T-cell (primary cell): ENCODE measurements at regions of chr6 and their contacts with region 1.

Region 1: GRCh38 chr6:52284460-52285176 is at the start of gene MCM3:
- DNase-seq: peak; percentile 85 to 98 (median 94)
- ATAC-seq: peak; percentile 95 to 98 (median 98)
- H3K4me3 ChIP-seq: peak within 1 kb of the TSS; percentile 69 to 90
- H3K4me3 Mint-ChIP-seq: peak within 1 kb of the TSS in 1 of 3 donors; percentile 70
- H3K27ac ChIP-seq: peak within 1 kb of the TSS; percentile 72
- H3K27ac Mint-ChIP-seq: peak within 1 kb of the TSS in 1 of 2 donors; percentile 28
- H3K4me1 ChIP-seq: peaks cover 27 to 34% of the 10 kb centered on the region in 2 experiments
- H3K4me1 Mint-ChIP-seq: peaks cover 37 to 54% (median 38%) of the 10 kb centered on the region in 3 donors
- H3K27me3 ChIP-seq: no peaks in the 10 kb centered on the region
- H3K27me3 Mint-ChIP-seq: no peaks in the 10 kb centered on the region
- total RNA-seq, gene MCM3: 22.9 to 52.1 (median 47.5) TPM

Region 2: GRCh38 chr6:51711876-51712275 is 572.7 kb before region 1 on chr6:
- CTCF ChIA-PET with region 1: no interaction called
- POLR2A ChIA-PET with region 1: no interaction called
- DNase-seq: no peak
- ATAC-seq: no peak
- H3K4me3 ChIP-seq: no peak overlapping the region
- H3K4me3 Mint-ChIP-seq: no peak overlapping the region
- H3K27ac ChIP-seq: no peak overlapping the region
- H3K27ac Mint-ChIP-seq: no peak overlapping the region
- H3K4me1 ChIP-seq: no peaks in the 10 kb centered on the region
- H3K4me1 Mint-ChIP-seq: no peaks in the 10 kb centered on the region
- H3K27me3 ChIP-seq: no peaks in the 10 kb centered on the region
- H3K27me3 Mint-ChIP-seq: no peaks in the 10 kb centered on the region

Region 3: GRCh38 chr6:52087498-52087999 is 197.1 kb before region 1 on chr6 and contains the start of gene PKHD1:
- CTCF ChIA-PET with region 1: no interaction called
- POLR2A ChIA-PET with region 1: no interaction called
- DNase-seq: peak in 1 of 35 experiments; percentile 12
- ATAC-seq: no peak
- H3K4me3 ChIP-seq: no peak within 1 kb of the TSS
- H3K4me3 Mint-ChIP-seq: no peak within 1 kb of the TSS
- H3K27ac ChIP-seq: no peak within 1 kb of the TSS
- H3K27ac Mint-ChIP-seq: no peak within 1 kb of the TSS
- H3K4me1 ChIP-seq: no peaks in the 10 kb centered on the region
- H3K4me1 Mint-ChIP-seq: no peaks in the 10 kb centered on the region
- H3K27me3 ChIP-seq: peaks cover 0 to 3% of the 10 kb centered on the region in 2 experiments
- H3K27me3 Mint-ChIP-seq: peaks cover 5 to 9% of the 10 kb centered on the region in 2 donors
- total RNA-seq, gene PKHD1: 0.03 TPM in 2 of 5 donors, not detected in the others

Region 4: DNA sequence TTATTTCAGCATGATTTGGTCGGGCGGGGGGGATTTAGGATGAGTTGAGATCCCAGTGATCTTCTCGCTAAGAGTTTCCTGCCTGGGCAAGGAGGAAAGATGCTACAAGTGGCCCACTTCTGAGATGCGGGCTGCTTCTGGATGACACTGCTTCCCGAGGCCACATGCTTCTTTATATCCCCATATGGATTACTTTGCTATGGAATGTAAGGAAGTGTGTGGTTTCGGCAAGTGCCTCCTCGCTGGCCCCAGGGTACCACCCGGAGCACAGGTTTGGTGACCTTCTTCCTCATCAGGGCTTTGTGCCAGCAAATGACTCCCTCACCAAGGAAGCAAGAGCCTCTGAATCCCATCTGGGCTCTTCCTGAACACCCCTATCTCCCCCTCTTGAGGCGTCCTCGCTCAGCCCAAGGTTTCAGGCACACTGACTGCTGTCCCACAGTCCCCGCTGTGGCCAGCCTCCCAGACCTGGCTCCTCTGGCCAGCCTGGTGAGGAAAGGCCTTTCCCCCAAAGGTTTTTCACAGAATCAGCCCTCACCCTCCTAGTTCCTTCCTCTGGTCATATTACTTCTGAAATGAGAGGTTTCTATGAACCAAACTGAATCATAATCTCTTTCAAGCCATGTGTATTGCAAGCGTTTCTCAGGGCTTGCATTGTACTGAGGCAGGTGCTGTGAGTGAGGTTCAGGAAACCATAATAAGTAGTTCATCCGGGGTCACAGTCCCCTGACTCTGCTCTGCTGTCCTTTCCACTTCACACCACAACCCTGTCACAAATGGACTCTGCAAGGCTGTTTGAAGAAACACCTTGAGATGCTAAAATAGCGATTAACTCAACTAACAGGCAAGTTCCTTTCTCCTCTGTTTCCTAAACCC is 140.2 kb before region 1 on chr6:
- CTCF ChIA-PET with region 1: no interaction called
- POLR2A ChIA-PET with region 1: no interaction called
- DNase-seq: no peak
- ATAC-seq: no peak
- H3K4me3 ChIP-seq: no peak overlapping the region
- H3K4me3 Mint-ChIP-seq: no peak overlapping the region
- H3K27ac ChIP-seq: no peak overlapping the region
- H3K27ac Mint-ChIP-seq: no peak overlapping the region
- H3K4me1 ChIP-seq: no peaks in the 10 kb centered on the region
- H3K4me1 Mint-ChIP-seq: no peaks in the 10 kb centered on the region
- H3K27me3 ChIP-seq: peaks cover 0 to 18% of the 10 kb centered on the region in 2 experiments
- H3K27me3 Mint-ChIP-seq: peaks cover 26 to 33% of the 10 kb centered on the region in 2 donors

Region 5: DNA sequence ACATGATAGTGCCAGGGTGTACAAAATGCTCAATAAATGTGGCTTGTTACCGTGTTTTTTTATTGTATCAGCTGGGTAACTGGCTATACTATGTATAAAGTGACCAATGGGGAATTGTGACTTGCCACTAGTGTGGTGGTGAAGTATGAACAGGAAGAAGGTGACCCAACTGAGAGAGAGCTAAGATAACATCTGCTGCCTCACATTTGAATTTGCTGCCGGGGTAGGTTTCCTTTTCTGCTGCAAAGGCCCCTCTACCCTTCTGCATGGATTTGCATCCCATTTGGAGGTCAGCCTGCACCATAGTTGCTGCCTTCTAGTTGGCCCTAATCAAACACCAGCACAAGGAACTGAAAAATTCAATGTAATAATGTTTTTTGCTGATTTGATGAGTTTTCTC is 74.4 kb before region 1 on chr6:
- CTCF ChIA-PET with region 1: no interaction called
- POLR2A ChIA-PET with region 1: no interaction called
- DNase-seq: no peak
- ATAC-seq: no peak
- H3K4me3 ChIP-seq: no peak overlapping the region
- H3K4me3 Mint-ChIP-seq: no peak overlapping the region
- H3K27ac ChIP-seq: no peak overlapping the region
- H3K27ac Mint-ChIP-seq: no peak overlapping the region
- H3K4me1 ChIP-seq: no peaks in the 10 kb centered on the region
- H3K4me1 Mint-ChIP-seq: peaks cover 6 to 10% (median 8%) of the 10 kb centered on the region in 3 donors
- H3K27me3 ChIP-seq: peaks cover 0 to 7% of the 10 kb centered on the region in 2 experiments
- H3K27me3 Mint-ChIP-seq: peaks cover 18 to 20% of the 10 kb centered on the region in 2 donors

Region 6: GRCh38 chr6:52263709-52264540 is 20.7 kb before region 1 on chr6:
- CTCF ChIA-PET with region 1: interaction called, 8 to 13 read pairs
- POLR2A ChIA-PET with region 1: no interaction called
- DNase-seq: peak; percentile 32 to 81 (median 60)
- ATAC-seq: peak; percentile 74 to 82 (median 80)
- H3K4me3 ChIP-seq: no peak overlapping the region
- H3K4me3 Mint-ChIP-seq: no peak overlapping the region
- H3K27ac ChIP-seq: no peak overlapping the region
- H3K27ac Mint-ChIP-seq: peak overlapping the region in 1 of 2 donors; percentile 34
- H3K4me1 ChIP-seq: peaks cover 0 to 7% of the 10 kb centered on the region in 2 experiments
- H3K4me1 Mint-ChIP-seq: peaks cover 7 to 13% (median 12%) of the 10 kb centered on the region in 3 donors
- H3K27me3 ChIP-seq: no peaks in the 10 kb centered on the region
- H3K27me3 Mint-ChIP-seq: no peaks in the 10 kb centered on the region

Region 7: GRCh38 chr6:52304983-52305390 is 20.4 kb after region 1 on chr6:
- CTCF ChIA-PET with region 1: interaction called, 8 to 12 read pairs
- POLR2A ChIA-PET with region 1: interaction called, 3 to 6 read pairs
- DNase-seq: peak in 1 of 35 experiments; percentile 39
- ATAC-seq: peak in 2 of 4 experiments; percentile 32 to 34
- H3K4me3 ChIP-seq: no peak overlapping the region
- H3K4me3 Mint-ChIP-seq: peak overlapping the region; percentile 51 to 65 (median 54)
- H3K27ac ChIP-seq: peak overlapping the region; percentile 86
- H3K27ac Mint-ChIP-seq: peak overlapping the region; percentile 95
- H3K4me1 ChIP-seq: peaks cover 40 to 66% of the 10 kb centered on the region in 2 experiments
- H3K4me1 Mint-ChIP-seq: peaks cover 76 to 87% (median 80%) of the 10 kb centered on the region in 3 donors
- H3K27me3 ChIP-seq: no peaks in the 10 kb centered on the region
- H3K27me3 Mint-ChIP-seq: no peaks in the 10 kb centered on the region

Region 8: DNA sequence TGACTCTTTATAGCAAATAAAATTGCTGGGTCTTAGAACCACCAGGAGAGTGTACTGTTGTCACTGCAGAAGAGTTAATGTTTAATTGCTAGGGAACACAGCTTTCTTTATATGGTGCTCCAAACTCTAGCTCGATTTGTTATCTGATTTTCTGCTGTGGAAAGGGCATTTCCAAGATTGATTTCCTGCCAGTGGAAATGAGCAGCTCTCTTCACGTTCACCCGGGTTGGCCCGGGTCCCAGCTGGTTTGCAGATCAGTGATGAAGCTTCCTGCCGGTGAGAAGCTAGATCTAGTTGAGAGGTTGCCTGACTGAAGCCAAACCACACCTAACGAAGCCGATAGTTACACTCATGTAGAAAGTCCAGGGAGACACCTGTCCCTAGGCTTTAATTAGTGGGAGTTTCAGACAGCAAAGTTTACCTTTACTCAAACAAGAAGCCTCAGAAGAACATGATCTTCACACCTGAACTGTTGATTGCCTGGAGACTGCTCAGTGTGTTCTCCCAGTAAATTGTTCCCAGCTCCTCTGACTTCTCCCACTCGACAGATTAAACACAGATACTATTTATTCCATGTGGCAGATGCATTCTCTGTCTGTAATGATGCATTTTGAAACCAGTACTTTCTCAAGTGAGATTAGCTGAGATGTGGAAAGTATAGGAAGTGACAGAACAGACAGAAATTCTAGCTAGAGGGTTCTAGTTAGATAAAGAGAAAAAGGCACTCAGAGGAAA is 105.2 kb after region 1 on chr6:
- CTCF ChIA-PET with region 1: interaction called, 8 to 52 read pairs
- POLR2A ChIA-PET with region 1: interaction called, 5 to 9 read pairs
- DNase-seq: peak; percentile 22 to 77 (median 57)
- ATAC-seq: peak; percentile 48 to 69 (median 64)
- H3K4me3 ChIP-seq: peak overlapping the region; percentile 25 to 29
- H3K4me3 Mint-ChIP-seq: peak overlapping the region; percentile 68 to 81 (median 81)
- H3K27ac ChIP-seq: peak overlapping the region; percentile 89
- H3K27ac Mint-ChIP-seq: peak overlapping the region; percentile 96 to 98
- H3K4me1 ChIP-seq: peaks cover 50 to 65% of the 10 kb centered on the region in 2 experiments
- H3K4me1 Mint-ChIP-seq: peaks cover 85 to 96% (median 92%) of the 10 kb centered on the region in 3 donors
- H3K27me3 ChIP-seq: no peaks in the 10 kb centered on the region
- H3K27me3 Mint-ChIP-seq: no peaks in the 10 kb centered on the region

Region 9: GRCh38 chr6:52407467-52407866 is 122.8 kb after region 1 on chr6:
- CTCF ChIA-PET with region 1: interaction called, 16 to 91 read pairs
- POLR2A ChIA-PET with region 1: no interaction called
- DNase-seq: peak in 3 of 35 experiments; percentile 22 to 63 (median 23)
- ATAC-seq: peak; percentile 61 to 86 (median 73)
- H3K4me3 ChIP-seq: no peak overlapping the region
- H3K4me3 Mint-ChIP-seq: no peak overlapping the region
- H3K27ac ChIP-seq: no peak overlapping the region
- H3K27ac Mint-ChIP-seq: peak overlapping the region; percentile 46 to 66
- H3K4me1 ChIP-seq: peaks cover 0 to 11% of the 10 kb centered on the region in 2 experiments
- H3K4me1 Mint-ChIP-seq: peaks cover 29 to 36% (median 36%) of the 10 kb centered on the region in 3 donors
- H3K27me3 ChIP-seq: no peaks in the 10 kb centered on the region
- H3K27me3 Mint-ChIP-seq: no peaks in the 10 kb centered on the region

Region 10: DNA sequence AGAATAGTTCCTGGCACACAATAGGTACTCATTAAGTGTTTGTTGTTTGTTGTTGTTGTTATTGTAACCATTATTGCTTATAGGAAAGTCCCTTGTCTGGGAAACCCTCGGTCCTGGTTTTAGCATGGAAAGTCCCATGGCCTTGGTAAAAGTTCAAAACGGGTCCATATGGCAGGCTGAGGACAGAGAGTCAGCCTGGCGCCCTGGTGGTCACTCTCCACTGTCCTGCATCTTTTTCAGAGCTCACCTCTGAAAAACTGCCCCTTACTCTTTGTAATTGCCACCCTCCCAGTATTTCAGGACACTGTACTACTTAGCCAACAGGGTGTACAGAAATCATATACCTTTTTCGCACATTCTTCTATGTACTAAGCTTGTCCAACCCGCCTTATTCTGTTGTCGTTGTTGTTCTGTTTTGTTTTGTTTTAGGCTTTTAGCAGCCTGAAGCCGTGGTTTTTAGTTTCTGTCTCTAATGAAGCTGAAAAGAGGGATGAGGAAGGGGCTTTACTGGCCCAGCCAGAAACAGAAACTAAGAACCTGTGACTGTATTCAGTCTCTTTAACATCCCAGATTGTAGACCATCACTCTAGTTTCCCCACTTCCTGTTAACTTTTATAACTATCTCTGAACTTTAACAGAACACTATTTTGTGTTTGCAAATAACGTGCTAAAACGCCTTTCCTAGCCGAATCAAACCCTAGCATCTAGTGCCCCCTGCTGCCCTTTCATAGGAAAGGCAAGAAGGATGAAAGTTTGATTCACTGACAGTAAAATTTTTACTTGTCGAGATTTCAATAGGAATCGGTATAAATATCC is 378.7 kb after region 1 on chr6:
- CTCF ChIA-PET with region 1: interaction called, 6 to 11 read pairs
- POLR2A ChIA-PET with region 1: no interaction called
- DNase-seq: peak in 34 of 35 experiments; percentile 25 to 89 (median 50)
- ATAC-seq: peak; percentile 61 to 78 (median 74)
- H3K4me3 ChIP-seq: peak overlapping the region; percentile 54 to 70
- H3K4me3 Mint-ChIP-seq: no peak overlapping the region
- H3K27ac ChIP-seq: no peak overlapping the region
- H3K27ac Mint-ChIP-seq: no peak overlapping the region
- H3K4me1 ChIP-seq: peaks cover 3 to 18% of the 10 kb centered on the region in 2 experiments
- H3K4me1 Mint-ChIP-seq: no peaks in the 10 kb centered on the region
- H3K27me3 ChIP-seq: peaks cover 0 to 21% of the 10 kb centered on the region in 2 experiments
- H3K27me3 Mint-ChIP-seq: no peaks in the 10 kb centered on the region